OCI-LY7 (cell line): ENCODE measurements at regions of chr17 and their contacts with region 1.

Region 1: DNA sequence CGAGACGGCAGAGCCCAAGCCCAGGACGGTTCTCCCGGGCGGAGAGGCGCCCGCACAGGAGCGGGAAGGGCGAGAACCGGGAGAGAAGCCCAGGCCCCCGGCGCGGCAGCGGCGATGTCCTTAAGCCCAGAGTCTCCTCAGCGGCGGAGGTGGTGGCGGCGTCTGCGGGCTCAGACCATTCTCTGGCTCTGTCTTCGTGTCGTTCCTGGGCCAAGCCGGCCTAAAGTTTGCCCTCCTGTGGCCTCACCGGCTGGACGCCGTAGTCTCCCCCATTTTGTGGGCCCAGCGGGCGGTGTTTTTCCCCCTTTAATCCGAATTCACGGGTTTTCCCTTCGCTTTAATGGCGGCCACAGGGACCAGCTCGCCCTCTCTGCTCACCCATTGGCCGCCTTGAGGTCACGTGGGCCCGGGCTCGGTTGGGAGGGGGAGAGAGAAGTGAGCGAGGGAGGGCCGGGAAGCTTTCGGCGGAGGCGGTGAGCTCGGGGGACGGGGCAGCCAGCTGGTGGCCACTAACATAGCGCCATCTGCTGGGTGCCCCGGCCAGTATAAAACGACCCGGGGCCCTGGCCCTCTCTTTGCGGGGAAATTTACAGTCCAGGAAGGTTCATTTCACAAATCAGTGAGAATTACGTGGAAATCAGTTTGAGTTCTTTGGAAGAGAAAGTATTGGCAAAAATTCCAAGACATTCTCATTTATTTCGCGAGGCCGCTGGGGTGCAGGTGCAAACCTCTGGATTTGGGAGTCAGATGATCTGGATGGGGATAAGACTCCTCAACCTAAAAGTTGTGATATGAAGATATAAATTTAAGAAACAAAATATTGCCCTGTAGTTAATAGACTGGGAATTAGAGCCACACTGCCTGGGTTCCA is 755 bp upstream of the MED13 start:
- DNase-seq: peak; percentile 97
- H3K4me3 ChIP-seq: peak overlapping the region; percentile 99
- H3K27ac ChIP-seq: peak overlapping the region; percentile 80
- H3K4me1 ChIP-seq: peaks cover 26% of the 10 kb centered on the region
- CTCF ChIP-seq: peak; percentile 96

Region 2: DNA sequence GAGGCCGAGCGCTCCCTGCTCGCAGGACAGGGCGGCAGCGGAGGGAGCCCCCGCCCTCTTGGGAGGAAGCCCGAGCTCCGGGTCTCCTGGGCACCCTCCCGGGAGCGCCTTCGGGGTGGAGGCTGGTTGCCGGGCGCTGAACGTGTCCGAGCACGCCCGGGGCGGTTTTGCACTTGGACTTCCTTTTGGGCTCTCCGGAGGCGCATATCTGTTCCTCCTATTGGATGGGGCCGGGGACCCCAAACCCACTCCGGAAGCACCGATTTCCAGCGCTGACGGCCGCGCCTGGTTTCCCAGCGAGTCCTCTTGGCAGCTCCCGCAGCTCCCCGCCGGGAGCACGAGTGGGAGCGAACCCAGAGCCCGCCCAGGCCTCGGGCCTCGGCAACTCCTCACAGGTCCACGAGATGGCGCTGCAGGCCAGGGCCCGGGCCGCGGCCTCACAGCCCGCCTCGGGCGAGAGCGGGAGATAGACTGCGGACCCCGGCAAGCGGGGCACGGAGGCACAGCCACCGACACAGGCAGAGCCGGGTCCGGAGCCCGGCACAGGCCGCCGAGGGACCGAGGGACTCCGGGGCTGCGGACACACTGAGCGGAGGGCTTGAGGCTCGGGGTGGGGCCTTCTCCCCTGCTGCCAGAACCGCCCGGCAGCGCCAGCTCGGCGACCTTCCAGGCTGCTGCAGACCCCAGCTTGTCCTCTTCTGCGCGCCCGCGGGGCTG is 653.5 kb before region 1 on chr17:
- CTCF ChIA-PET with region 1: no interaction called
- POLR2A ChIA-PET with region 1: no interaction called
- intact Hi-C with region 1: loop called (anchors 5 kb)
- DNase-seq: peak; percentile 74
- H3K4me3 ChIP-seq: peak overlapping the region; percentile 62
- H3K27ac ChIP-seq: no peak overlapping the region
- H3K4me1 ChIP-seq: peaks cover 16% of the 10 kb centered on the region
- CTCF ChIP-seq: peak; percentile 92

Region 3: GRCh38 chr17:61635913-61636432 is 429.9 kb before region 1 on chr17:
- CTCF ChIA-PET with region 1: no interaction called
- POLR2A ChIA-PET with region 1: no interaction called
- intact Hi-C with region 1: loop called (anchors 1 kb)
- DNase-seq: peak; percentile 70
- H3K4me3 ChIP-seq: no peak overlapping the region
- H3K27ac ChIP-seq: no peak overlapping the region
- H3K4me1 ChIP-seq: no peaks in the 10 kb centered on the region
- CTCF ChIP-seq: peak; percentile 98

Region 4: GRCh38 chr17:61783556-61784304 is 282.1 kb before region 1 on chr17:
- CTCF ChIA-PET with region 1: no interaction called
- POLR2A ChIA-PET with region 1: no interaction called
- intact Hi-C with region 1: loop called (anchors 10 kb)
- DNase-seq: peak; percentile 78
- H3K4me3 ChIP-seq: peak overlapping the region; percentile 3
- H3K27ac ChIP-seq: peak overlapping the region; percentile 86
- H3K4me1 ChIP-seq: peaks cover 40% of the 10 kb centered on the region
- CTCF ChIP-seq: no peak

Region 5: GRCh38 chr17:61795546-61795945 is 270.3 kb before region 1 on chr17:
- CTCF ChIA-PET with region 1: no interaction called
- POLR2A ChIA-PET with region 1: no interaction called
- intact Hi-C with region 1: no loop called
- DNase-seq: no peak
- H3K4me3 ChIP-seq: no peak overlapping the region
- H3K27ac ChIP-seq: no peak overlapping the region
- H3K4me1 ChIP-seq: no peaks in the 10 kb centered on the region
- CTCF ChIP-seq: no peak

Region 6: GRCh38 chr17:61862975-61863800 is 202.6 kb before region 1 on chr17 and contains the start of gene BRIP1:
- CTCF ChIA-PET with region 1: no interaction called
- POLR2A ChIA-PET with region 1: interaction called, 3 read pairs
- intact Hi-C with region 1: loop called (anchors 2 kb)
- DNase-seq: peak; percentile 96
- H3K4me3 ChIP-seq: peak within 1 kb of the TSS; percentile 87
- H3K27ac ChIP-seq: peak within 1 kb of the TSS; percentile 80
- H3K4me1 ChIP-seq: peaks cover 29% of the 10 kb centered on the region
- CTCF ChIP-seq: no peak
- total RNA-seq, gene BRIP1: 33.8 and 53.0 TPM in 2 replicates

Region 7: DNA sequence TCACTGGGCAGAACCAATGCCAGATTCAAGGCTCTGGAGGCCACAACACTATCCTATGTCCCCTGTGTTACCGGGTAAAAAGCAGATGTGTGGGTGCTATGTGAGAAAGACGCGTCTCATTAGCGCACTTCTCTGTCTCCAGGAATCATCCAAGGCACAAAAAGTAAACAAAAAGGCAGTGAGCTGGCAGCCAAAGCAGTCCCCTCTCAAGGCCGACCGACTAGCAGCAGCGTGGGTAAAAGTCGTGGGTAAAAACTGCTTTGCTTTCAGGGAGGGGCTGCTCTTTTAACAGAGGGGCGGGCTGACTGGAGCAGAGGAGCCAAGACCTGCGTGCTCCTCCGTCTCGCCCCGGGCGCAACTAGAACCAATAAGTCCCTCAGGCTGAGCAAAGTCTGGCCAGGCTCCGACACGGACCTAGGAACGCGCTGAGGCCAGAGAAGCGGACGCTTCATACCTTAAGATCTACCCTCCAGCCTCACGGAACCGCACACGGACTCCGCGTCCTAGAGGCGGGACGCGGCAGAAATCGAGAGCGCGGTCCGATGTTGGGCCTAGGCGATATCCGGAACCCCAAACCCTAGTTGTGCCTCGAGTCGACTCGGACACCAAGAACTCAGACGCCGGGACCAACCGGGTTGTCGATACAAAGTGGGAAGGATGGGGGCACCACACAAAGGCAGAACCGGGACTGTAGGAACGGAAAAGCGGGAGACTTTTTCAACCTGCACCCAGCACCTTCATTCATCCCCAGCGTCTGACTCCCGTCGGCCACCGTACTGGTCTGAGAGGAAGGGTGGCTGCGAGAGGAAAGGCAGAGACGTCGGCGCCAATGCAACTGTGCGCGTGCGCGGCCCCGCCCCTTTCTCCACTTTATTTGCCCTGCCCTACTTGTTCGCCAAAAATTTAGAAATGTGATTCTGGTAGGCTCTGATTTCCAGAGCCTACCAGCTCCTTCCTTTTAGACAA is 138.3 kb before region 1 on chr17 and contains the start of gene INTS2:
- CTCF ChIA-PET with region 1: no interaction called
- POLR2A ChIA-PET with region 1: no interaction called
- intact Hi-C with region 1: loop called (anchors 2 kb)
- DNase-seq: peak; percentile 93
- H3K4me3 ChIP-seq: peak within 1 kb of the TSS; percentile 75
- H3K27ac ChIP-seq: peak within 1 kb of the TSS; percentile 61
- H3K4me1 ChIP-seq: peaks cover 20% of the 10 kb centered on the region
- CTCF ChIP-seq: 0 out of 2 replicates have a peak, but pooled peaks have one; percentile 16
- total RNA-seq, gene INTS2: 15.8 and 17.9 TPM in 2 replicates